Motor neuron (in vitro differentiated cells): ENCODE measurements at regions of chr10 and their contacts with region 1.

Region 1: GRCh38 chr10:48289501-48290238 is 15.2 kb upstream of the FRMPD2 start:
- ATAC-seq: peak; percentile 73 to 89 (median 84)
- H3K4me3 ChIP-seq: no peak overlapping the region
- H3K27ac ChIP-seq: no peak overlapping the region
- H3K4me1 ChIP-seq: peaks cover 6 to 27% of the 10 kb centered on the region in 2 donors

Region 2: GRCh38 chr10:46556515-46557315 is 1733.0 kb before region 1 on chr10 and contains the start of gene GPRIN2:
- in situ Hi-C with region 1: loop called in 1 of 9 experiments (anchors 25 kb)
- ATAC-seq: peak in 5 of 8 experiments; percentile 23 to 71 (median 49)
- H3K4me3 ChIP-seq: peak within 1 kb of the TSS; percentile 40 to 54 (median 45)
- H3K27ac ChIP-seq: no peak within 1 kb of the TSS
- H3K4me1 ChIP-seq: peaks cover 3 to 6% of the 10 kb centered on the region in 2 donors
- total RNA-seq, gene GPRIN2: 0.36 to 2.2 (median 1.2) TPM in 7 of 8 experiments, not detected in the other

Region 3: DNA sequence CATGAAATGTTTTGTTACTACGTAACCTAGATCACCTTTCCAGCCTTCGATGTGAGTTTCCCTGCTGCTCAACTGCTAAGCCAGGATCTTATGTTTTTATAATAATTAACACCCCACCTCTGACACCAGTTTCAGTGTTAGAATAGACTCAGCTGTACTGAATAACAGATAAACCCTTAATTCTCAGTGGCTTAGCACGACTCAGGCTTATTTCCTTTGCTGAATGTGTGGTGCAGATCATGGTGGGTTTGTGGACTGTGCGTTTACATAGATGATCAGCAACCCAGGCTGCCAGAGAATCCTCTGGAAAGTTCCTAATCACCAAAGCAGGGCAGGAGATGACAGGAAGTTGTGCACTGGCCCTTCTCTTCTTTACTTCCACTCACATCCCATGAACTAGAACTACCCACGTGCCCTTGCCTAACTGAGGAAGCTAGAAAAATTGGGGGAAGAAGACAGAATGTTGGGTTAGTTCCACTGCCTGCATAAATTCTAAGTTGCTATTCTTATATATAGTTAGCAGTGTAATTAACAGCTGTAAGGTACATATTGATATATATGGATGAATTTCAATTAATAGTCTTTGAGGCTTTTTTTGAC is 128.6 kb after region 1 on chr10:
- in situ Hi-C with region 1: no loop called
- ATAC-seq: no peak
- H3K4me3 ChIP-seq: no peak overlapping the region
- H3K27ac ChIP-seq: no peak overlapping the region
- H3K4me1 ChIP-seq: no peaks in the 10 kb centered on the region